CD4-positive, alpha-beta T cell (primary cell): ENCODE measurements at regions of chr19 and their contacts with region 1.

Region 1: DNA sequence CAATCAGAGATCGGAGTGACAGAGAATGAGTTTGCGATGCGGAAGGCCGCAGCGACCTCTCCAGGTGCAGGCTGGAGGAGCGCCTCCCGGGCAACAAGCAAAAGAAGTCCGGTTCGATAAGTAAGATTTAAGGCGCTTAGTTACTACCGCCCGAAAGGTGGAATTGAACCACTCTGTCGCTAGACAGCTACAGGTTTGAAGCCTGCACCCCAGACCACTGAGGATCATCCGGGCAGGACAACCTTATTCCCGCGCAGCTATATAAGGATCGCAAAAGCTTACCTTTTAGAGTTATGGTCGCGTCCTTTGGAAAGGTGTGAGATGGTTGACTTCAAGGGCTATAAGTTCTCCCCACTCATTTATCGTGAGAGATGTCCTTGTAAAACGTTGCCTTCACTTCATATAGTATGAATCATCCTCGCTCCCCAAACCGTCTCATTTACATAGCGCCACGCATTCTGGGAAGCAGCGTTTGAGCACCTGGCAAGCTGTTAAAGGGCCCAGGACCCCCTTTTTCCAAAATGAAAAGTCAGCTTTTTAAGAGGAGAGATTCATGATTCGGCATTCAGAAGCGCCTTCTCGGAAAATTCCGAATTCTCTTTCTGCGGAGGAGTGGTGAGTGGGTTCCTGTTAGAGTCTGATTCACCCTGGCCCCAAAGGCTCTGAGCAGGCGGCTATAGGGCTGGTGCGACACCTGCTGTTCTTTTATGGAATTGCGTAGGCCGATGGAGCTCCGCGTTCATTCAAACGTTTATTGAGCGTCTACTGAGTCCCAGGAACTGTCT is 10.8 kb downstream of the FOSB start:
- DNase-seq: peak; percentile 79 to 95 (median 86)
- ATAC-seq: peak; percentile 74
- H3K4me3 ChIP-seq: peak overlapping the region; percentile 64
- H3K4me3 Mint-ChIP-seq: peak overlapping the region; percentile 86
- H3K27ac ChIP-seq: peak overlapping the region; percentile 98 to 99
- H3K27ac Mint-ChIP-seq: peak overlapping the region; percentile 99
- H3K4me1 ChIP-seq: peaks cover 37% of the 10 kb centered on the region
- H3K4me1 Mint-ChIP-seq: peaks cover 29% of the 10 kb centered on the region
- H3K27me3 ChIP-seq: peaks cover 0 to under 1% of the 10 kb centered on the region in 2 experiments
- H3K27me3 Mint-ChIP-seq: peaks cover 21% of the 10 kb centered on the region
- CTCF ChIP-seq: peak; percentile 85

Region 2: DNA sequence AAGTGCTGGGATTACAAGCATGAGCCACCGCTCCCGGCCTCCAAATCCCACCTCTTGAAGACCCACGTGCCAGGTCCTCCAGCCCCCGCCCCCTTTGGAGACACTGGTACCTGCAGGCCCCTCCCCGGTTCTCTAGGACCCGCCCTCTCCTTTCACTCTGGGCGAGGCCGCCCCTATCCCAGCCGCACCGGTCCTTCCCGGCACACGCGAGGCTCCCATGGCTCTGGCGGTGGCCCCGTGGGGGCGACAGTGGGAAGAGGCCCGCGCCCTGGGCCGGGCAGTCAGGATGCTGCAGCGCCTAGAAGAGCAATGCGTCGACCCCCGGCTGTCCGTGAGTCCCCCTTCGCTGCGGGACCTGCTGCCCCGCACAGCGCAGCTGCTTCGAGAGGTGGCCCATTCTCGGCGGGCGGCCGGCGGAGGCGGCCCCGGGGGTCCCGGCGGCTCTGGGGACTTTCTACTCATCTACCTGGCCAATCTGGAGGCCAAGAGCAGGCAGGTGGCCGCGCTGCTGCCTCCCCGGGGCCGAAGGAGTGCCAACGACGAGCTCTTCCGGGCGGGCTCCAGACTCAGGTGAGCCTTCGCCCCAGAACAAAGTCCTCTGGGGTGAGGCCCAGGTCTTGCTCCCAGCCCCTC is 700.8 kb before region 1 on chr19 and contains the start of gene CBLC:
- CTCF ChIA-PET with region 1: no interaction called
- POLR2A ChIA-PET with region 1: no interaction called
- intact Hi-C with region 1: no loop called
- DNase-seq: no peak
- ATAC-seq: no peak
- H3K4me3 ChIP-seq: no peak within 1 kb of the TSS
- H3K4me3 Mint-ChIP-seq: no peak within 1 kb of the TSS
- H3K27ac ChIP-seq: no peak within 1 kb of the TSS
- H3K27ac Mint-ChIP-seq: no peak within 1 kb of the TSS
- H3K4me1 ChIP-seq: peaks cover 4% of the 10 kb centered on the region
- H3K4me1 Mint-ChIP-seq: no peaks in the 10 kb centered on the region
- H3K27me3 ChIP-seq: peaks cover 0 to 4% of the 10 kb centered on the region in 2 experiments
- H3K27me3 Mint-ChIP-seq: no peaks in the 10 kb centered on the region
- CTCF ChIP-seq: no peak
- total RNA-seq, gene CBLC: not detected

Region 3: DNA sequence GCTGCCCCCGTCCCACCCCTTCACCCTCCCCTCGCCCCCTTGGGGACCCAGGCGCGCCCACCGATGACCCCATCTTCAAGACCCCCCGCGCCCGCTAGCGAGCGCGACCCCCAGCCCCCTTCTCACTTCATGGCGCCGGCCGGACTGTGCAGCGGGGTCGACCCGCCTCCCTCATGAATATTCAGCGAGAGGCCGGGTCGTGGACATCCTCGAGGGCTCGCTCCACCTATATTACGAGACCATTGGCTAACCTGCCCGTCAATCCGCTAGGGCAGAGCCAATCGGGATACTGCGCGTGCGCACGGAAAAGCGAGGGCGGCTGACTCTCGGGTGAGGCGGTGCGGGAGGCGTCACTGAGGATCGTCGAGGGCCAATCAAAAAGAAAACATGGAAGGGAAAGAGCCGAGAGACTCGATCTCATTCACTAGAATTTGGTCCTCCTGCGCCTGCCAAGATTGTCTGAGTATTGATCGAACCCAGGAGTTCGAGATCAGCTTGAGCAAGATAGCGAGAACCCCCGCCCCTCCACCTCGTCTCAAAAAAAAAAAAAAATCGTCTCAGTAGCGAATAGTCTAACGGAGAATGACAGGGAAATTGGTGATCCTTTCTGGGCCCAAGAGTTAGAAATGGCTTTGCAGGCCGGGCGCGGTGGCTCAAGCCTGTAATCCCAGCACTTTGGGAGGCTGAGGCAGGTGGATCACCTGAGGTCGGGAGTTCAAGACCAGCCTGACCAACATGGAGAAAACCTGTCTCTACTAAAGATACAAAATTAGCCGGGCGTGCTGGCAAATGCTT is 108.0 kb before region 1 on chr19 and contains the start of gene ERCC2:
- CTCF ChIA-PET with region 1: interaction called, 4 read pairs
- POLR2A ChIA-PET with region 1: no interaction called
- intact Hi-C with region 1: loop called in 1 of 2 experiments (anchors 1 kb)
- DNase-seq: peak; percentile 99 to 100 (median 99)
- ATAC-seq: peak; percentile 99
- H3K4me3 ChIP-seq: peak within 1 kb of the TSS; percentile 92
- H3K4me3 Mint-ChIP-seq: peak within 1 kb of the TSS; percentile 88
- H3K27ac ChIP-seq: peak within 1 kb of the TSS in 1 of 2 donors; percentile 78
- H3K27ac Mint-ChIP-seq: peak within 1 kb of the TSS; percentile 88
- H3K4me1 ChIP-seq: peaks cover 26% of the 10 kb centered on the region
- H3K4me1 Mint-ChIP-seq: peaks cover 7% of the 10 kb centered on the region
- H3K27me3 ChIP-seq: no peaks in the 10 kb centered on the region
- H3K27me3 Mint-ChIP-seq: no peaks in the 10 kb centered on the region
- CTCF ChIP-seq: no peak
- total RNA-seq, gene ERCC2: 8.7 to 9.6 TPM

Region 4: GRCh38 chr19:45391340-45391739 is 87.3 kb before region 1 on chr19:
- CTCF ChIA-PET with region 1: no interaction called
- POLR2A ChIA-PET with region 1: no interaction called
- intact Hi-C with region 1: no loop called
- DNase-seq: no peak
- ATAC-seq: no peak
- H3K4me3 ChIP-seq: no peak overlapping the region
- H3K4me3 Mint-ChIP-seq: no peak overlapping the region
- H3K27ac ChIP-seq: no peak overlapping the region
- H3K27ac Mint-ChIP-seq: no peak overlapping the region
- H3K4me1 ChIP-seq: peaks cover 3% of the 10 kb centered on the region
- H3K4me1 Mint-ChIP-seq: no peaks in the 10 kb centered on the region
- H3K27me3 ChIP-seq: peaks cover 2 to 16% of the 10 kb centered on the region in 2 experiments
- H3K27me3 Mint-ChIP-seq: peaks cover 24% of the 10 kb centered on the region
- CTCF ChIP-seq: no peak

Region 5: GRCh38 chr19:45423589-45424190 is 55.0 kb before region 1 on chr19 and contains the start of gene ERCC1:
- CTCF ChIA-PET with region 1: interaction called, 23 read pairs
- POLR2A ChIA-PET with region 1: interaction called, 7 read pairs
- intact Hi-C with region 1: loop called (anchors 1 kb)
- DNase-seq: peak in 7 of 14 experiments; percentile 36 to 87 (median 48)
- ATAC-seq: peak; percentile 58
- H3K4me3 ChIP-seq: peak within 1 kb of the TSS; percentile 90
- H3K4me3 Mint-ChIP-seq: peak within 1 kb of the TSS; percentile 92
- H3K27ac ChIP-seq: peak within 1 kb of the TSS; percentile 54 to 75
- H3K27ac Mint-ChIP-seq: peak within 1 kb of the TSS; percentile 80
- H3K4me1 ChIP-seq: peaks cover 53% of the 10 kb centered on the region
- H3K4me1 Mint-ChIP-seq: peaks cover 48% of the 10 kb centered on the region
- H3K27me3 ChIP-seq: peaks cover 4 to 5% of the 10 kb centered on the region in 2 experiments
- H3K27me3 Mint-ChIP-seq: peaks cover 9% of the 10 kb centered on the region
- CTCF ChIP-seq: no peak
- total RNA-seq, gene ERCC1: 32.5 to 32.6 TPM

Region 6: DNA sequence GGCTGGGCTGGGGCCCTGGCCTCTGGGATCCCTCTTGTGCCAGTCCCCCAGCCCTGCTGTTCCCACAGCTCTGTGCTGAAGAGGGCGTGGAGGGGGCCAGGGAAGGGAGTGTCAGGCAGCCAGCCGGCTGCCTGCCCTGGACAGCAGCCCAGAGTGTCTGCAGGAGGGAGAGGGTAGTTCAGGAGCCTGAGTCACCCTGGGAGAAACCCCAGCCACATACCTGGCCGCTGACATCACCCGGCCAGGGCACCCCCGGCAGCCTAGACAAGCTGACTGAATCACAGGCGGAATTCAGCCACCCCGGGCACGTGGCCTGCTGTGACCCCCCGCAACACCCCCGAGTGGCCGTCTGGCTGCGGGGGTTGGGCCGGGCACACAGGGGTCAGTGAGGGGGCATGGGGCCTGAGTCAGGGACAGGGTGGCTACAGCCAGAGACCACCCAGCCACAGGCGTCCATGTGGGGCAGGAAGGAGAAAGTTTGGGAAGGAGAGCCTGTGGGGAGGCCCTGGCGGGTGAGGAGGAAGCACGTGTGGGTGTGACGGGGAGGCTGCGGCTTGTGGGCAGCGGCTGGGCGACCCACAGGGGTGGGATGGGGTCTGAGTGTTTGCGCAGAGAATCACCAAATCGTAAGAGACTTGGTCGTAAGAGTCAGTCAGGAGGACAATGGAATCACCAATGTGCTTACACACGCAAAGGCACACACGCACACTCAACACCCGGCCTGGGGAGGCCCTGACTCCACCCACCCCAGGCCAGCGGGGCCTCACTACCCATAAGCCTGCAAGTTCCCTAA is 22.7 kb before region 1 on chr19:
- CTCF ChIA-PET with region 1: interaction called, 29 read pairs
- POLR2A ChIA-PET with region 1: no interaction called
- intact Hi-C with region 1: no loop called
- DNase-seq: peak in 11 of 14 experiments; percentile 32 to 93 (median 49)
- ATAC-seq: peak; percentile 32
- H3K4me3 ChIP-seq: no peak overlapping the region
- H3K4me3 Mint-ChIP-seq: peak overlapping the region; percentile 38
- H3K27ac ChIP-seq: no peak overlapping the region
- H3K27ac Mint-ChIP-seq: peak overlapping the region; percentile 70
- H3K4me1 ChIP-seq: peaks cover 37% of the 10 kb centered on the region
- H3K4me1 Mint-ChIP-seq: peaks cover 36% of the 10 kb centered on the region
- H3K27me3 ChIP-seq: peaks cover 0 to 2% of the 10 kb centered on the region in 2 experiments
- H3K27me3 Mint-ChIP-seq: no peaks in the 10 kb centered on the region
- CTCF ChIP-seq: no peak

Region 7: GRCh38 chr19:45753546-45753945 is 274.9 kb after region 1 on chr19:
- CTCF ChIA-PET with region 1: no interaction called
- POLR2A ChIA-PET with region 1: no interaction called
- intact Hi-C with region 1: no loop called
- DNase-seq: no peak
- ATAC-seq: no peak
- H3K4me3 ChIP-seq: no peak overlapping the region
- H3K4me3 Mint-ChIP-seq: no peak overlapping the region
- H3K27ac ChIP-seq: no peak overlapping the region
- H3K27ac Mint-ChIP-seq: no peak overlapping the region
- H3K4me1 ChIP-seq: no peaks in the 10 kb centered on the region
- H3K4me1 Mint-ChIP-seq: no peaks in the 10 kb centered on the region
- H3K27me3 ChIP-seq: no peaks in the 10 kb centered on the region
- H3K27me3 Mint-ChIP-seq: no peaks in the 10 kb centered on the region
- CTCF ChIP-seq: no peak